ENCODE measurements at regions of chr18 and their contacts with region 1.

Region 1: GRCh38 chr18:23412351-23412964 is 40.6 kb upstream of the RIOK3 start:
- DNase-seq: no peak
- ATAC-seq: no peak
- H3K4me3 ChIP-seq: no peak overlapping the region
- H3K27ac ChIP-seq: no peak overlapping the region
- H3K4me1 ChIP-seq: peaks cover 9% of the 10 kb centered on the region
- H3K27me3 ChIP-seq: no peaks in the 10 kb centered on the region
- CTCF ChIP-seq: no peak
- EP300 ChIP-seq: no peak
- POLR2A ChIP-seq: no peak
- RAD21 ChIP-seq: no peak

Region 2: GRCh38 chr18:22796069-22796468 is 616.4 kb before region 1 on chr18:
- CTCF ChIA-PET with region 1: no interaction called
- POLR2A ChIA-PET with region 1: no interaction called
- in situ Hi-C with region 1: loop called (anchors 25 kb)
- intact Hi-C with region 1: loop called (anchors 5 kb)
- DNase-seq: no peak
- ATAC-seq: no peak
- H3K4me3 ChIP-seq: no peak overlapping the region
- H3K27ac ChIP-seq: no peak overlapping the region
- H3K4me1 ChIP-seq: no peaks in the 10 kb centered on the region
- H3K27me3 ChIP-seq: no peaks in the 10 kb centered on the region; a peak in 1 of 5 replicates
- CTCF ChIP-seq: no peak
- EP300 ChIP-seq: no peak
- POLR2A ChIP-seq: no peak
- RAD21 ChIP-seq: no peak

Region 3: GRCh38 chr18:23077493-23078256 is 334.8 kb before region 1 on chr18:
- CTCF ChIA-PET with region 1: interaction called, 13 read pairs
- POLR2A ChIA-PET with region 1: no interaction called
- in situ Hi-C with region 1: loop called (anchors 10 kb)
- intact Hi-C with region 1: loop called (anchors 5 kb)
- DNase-seq: peak; percentile 75
- ATAC-seq: peak; percentile 95
- H3K4me3 ChIP-seq: peak overlapping the region in 1 of 3 experiments; percentile 36; a peak in 1 of 6 replicates
- H3K27ac ChIP-seq: no peak overlapping the region
- H3K4me1 ChIP-seq: peaks cover 28% of the 10 kb centered on the region
- H3K27me3 ChIP-seq: 0 out of 5 replicates have a peak, but pooled peaks cover 0 to 2% of the 10 kb centered on the region in 2 experiments
- CTCF ChIP-seq: peak; percentile 83
- EP300 ChIP-seq: no peak; a peak in 1 of 4 replicates
- POLR2A ChIP-seq: no peak
- RAD21 ChIP-seq: peak; percentile 81